ENCODE measurements at regions of chr15 and their contacts with region 1.

Region 1: DNA sequence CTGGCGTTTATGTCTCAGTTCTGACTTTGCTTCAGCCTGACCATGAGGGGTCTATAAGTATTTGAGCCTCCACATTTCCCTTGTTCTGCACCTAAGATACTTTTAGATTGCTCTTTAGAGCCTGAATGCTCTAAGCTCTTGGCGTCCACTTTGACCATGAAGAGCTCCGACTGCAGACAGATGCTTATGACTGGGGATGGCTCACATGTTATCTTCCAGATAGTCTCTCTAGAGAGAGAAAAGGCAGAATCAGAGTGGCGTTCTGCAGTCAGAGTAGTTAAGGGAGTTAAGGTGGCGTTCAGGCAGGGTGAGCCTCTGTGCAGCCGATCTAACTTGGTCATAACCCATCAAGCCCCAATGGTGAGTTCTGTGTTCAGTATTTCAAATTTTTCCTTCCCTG is 487.9 kb upstream of the NR2F2 start:
- DNase-seq: no peak
- H3K4me3 ChIP-seq: no peak overlapping the region
- H3K4me3 Mint-ChIP-seq: no peak overlapping the region
- H3K27ac Mint-ChIP-seq: no peak overlapping the region
- H3K4me1 ChIP-seq: no peaks in the 10 kb centered on the region
- H3K4me1 Mint-ChIP-seq: peaks cover 10% of the 10 kb centered on the region
- H3K27me3 ChIP-seq: no peaks in the 10 kb centered on the region
- H3K27me3 Mint-ChIP-seq: no peaks in the 10 kb centered on the region
- CTCF ChIP-seq: no peak

Region 2: DNA sequence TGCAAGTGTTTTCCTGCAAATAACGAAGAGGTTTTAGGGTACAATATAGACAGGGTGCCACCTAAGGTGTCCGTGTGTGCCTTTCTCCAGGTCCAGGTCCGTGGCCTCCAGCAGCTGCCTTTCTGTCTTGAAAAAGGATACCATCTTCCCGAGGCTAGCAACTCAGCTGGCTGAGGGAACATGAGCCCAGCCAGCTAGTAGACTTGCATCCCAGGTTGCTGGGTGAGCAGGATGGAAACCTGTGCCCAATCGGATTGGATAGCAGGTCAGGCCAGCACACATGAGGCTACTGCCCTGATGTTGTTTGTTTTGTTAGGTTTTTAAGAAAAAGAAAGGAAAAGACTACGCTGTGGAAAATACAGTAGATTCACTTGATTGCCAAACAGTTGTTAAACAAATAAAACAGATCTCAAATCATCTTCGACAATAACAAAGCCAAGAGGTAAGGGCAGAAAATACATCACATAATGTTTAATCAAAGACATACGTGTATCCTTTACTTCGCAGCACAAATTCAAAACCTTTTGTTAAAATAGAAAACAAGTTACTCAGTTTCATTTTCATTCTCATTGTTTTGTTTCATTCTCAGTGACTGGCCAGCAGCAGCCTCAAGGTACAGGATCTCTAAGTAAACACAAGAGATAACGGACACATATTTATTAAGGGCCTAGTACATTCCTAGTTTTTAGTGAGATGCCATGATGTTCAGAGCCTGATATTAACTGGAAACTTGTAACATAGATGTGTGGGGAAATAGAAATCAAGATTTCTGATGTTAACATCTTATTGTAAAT is 173.2 kb before region 1 on chr15:
- CTCF ChIA-PET with region 1: no interaction called
- POLR2A ChIA-PET with region 1: no interaction called
- intact Hi-C with region 1: no loop called
- DNase-seq: no peak
- H3K4me3 ChIP-seq: no peak overlapping the region
- H3K4me3 Mint-ChIP-seq: no peak overlapping the region
- H3K27ac Mint-ChIP-seq: no peak overlapping the region
- H3K4me1 ChIP-seq: no peaks in the 10 kb centered on the region
- H3K4me1 Mint-ChIP-seq: no peaks in the 10 kb centered on the region
- H3K27me3 ChIP-seq: no peaks in the 10 kb centered on the region; the same call in none of the 2 replicates
- H3K27me3 Mint-ChIP-seq: peaks cover 9% of the 10 kb centered on the region
- CTCF ChIP-seq: no peak

Region 3: GRCh38 chr15:96047255-96047931 is 204.8 kb after region 1 on chr15:
- CTCF ChIA-PET with region 1: interaction called, 10 read pairs
- POLR2A ChIA-PET with region 1: no interaction called
- intact Hi-C with region 1: no loop called
- DNase-seq: no peak
- H3K4me3 ChIP-seq: no peak overlapping the region
- H3K4me3 Mint-ChIP-seq: no peak overlapping the region
- H3K27ac Mint-ChIP-seq: no peak overlapping the region
- H3K4me1 ChIP-seq: peaks cover 32% of the 10 kb centered on the region
- H3K4me1 Mint-ChIP-seq: peaks cover 18% of the 10 kb centered on the region
- H3K27me3 ChIP-seq: no peaks in the 10 kb centered on the region
- H3K27me3 Mint-ChIP-seq: no peaks in the 10 kb centered on the region
- CTCF ChIP-seq: no peak